Sigmoid colon (tissue), 7 donors: ENCODE measurements at regions of chr17 and their contacts with region 1.

Region 1: GRCh38 chr17:17476865-17477467 is at the start of gene MED9:
- DNase-seq: peak; percentile 96
- H3K4me3 ChIP-seq: peak within 1 kb of the TSS; percentile 78 to 100 (median 98)
- H3K27ac ChIP-seq: peak within 1 kb of the TSS; percentile 90 to 95 (median 91)
- H3K4me1 ChIP-seq: peaks cover 0 to 46% (median 28%) of the 10 kb centered on the region in 4 donors
- H3K27me3 ChIP-seq: no peaks in the 10 kb centered on the region
- CTCF ChIP-seq: no peak
- EP300 ChIP-seq: peak in 1 of 4 donors; percentile 46
- POLR2A ChIP-seq: peak; percentile 16 to 57
- total RNA-seq, gene MED9: 9.7 to 15.3 (median 13.7) TPM

Region 2: DNA sequence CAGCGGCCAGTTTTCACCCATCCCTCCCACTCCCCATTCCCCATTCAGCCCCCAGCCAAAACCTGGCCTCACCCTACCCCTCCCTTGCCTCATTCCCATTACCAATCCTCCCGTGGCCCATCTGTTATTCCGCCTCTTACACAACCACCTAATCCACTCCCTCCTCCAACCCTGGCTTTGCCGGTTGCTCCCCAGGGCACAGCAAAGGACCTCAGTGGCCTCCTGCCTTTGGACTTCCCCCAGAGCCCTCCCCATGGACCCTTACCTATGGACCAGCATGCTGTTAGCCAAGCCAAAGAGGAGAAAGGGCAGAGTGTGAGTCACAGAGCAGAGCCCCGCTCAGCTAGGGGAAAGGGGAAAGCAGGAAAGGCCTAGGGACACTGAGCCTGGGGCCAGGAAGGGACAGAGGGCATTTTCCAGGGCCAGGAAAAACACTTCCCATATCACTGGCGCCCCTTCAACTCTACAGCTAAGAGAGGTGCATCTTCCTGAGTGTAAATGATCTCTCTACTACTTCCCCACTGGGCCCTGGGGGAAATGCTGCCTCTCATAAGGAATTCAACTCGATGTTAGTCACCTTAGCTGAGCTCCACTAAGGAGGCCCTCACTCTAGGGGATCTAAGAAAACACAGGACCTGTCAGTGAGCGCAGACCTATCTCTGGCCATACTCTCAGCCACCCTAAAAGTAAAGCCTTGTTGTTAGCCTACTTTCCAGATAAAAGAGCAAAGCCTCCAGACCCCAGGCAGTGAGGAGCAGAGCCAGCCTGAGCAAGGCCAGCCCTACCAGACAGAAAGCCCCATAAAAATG is 103.9 kb after region 1 on chr17:
- intact Hi-C with region 1: no loop called
- DNase-seq: no peak
- H3K4me3 ChIP-seq: no peak overlapping the region
- H3K27ac ChIP-seq: no peak overlapping the region
- H3K4me1 ChIP-seq: no peaks in the 10 kb centered on the region
- H3K27me3 ChIP-seq: no peaks in the 10 kb centered on the region
- CTCF ChIP-seq: no peak
- EP300 ChIP-seq: no peak
- POLR2A ChIP-seq: no peak

Region 3: GRCh38 chr17:17591355-17592298 is 114.7 kb after region 1 on chr17 and contains the start of gene PEMT:
- intact Hi-C with region 1: loop called (anchors 5 kb)
- DNase-seq: peak; percentile 99
- H3K4me3 ChIP-seq: peak within 1 kb of the TSS; percentile 65 to 81 (median 74)
- H3K27ac ChIP-seq: peak within 1 kb of the TSS; percentile 84 to 92 (median 89)
- H3K4me1 ChIP-seq: peaks cover 0 to 35% (median 22%) of the 10 kb centered on the region in 4 donors
- H3K27me3 ChIP-seq: no peaks in the 10 kb centered on the region
- CTCF ChIP-seq: no peak
- EP300 ChIP-seq: no peak
- POLR2A ChIP-seq: peak in 1 of 2 donors; percentile 36
- total RNA-seq, gene PEMT: 8.6 to 21.9 (median 16.6) TPM